ENCODE measurements at regions of chr7 and their contacts with region 1.

Region 1: GRCh38 chr7:148962823-148963582 is 65.3 kb downstream of the PDIA4 start:
- DNase-seq: peak; percentile 86
- H3K4me3 Mint-ChIP-seq: peak overlapping the region; percentile 91
- H3K27ac Mint-ChIP-seq: peak overlapping the region; percentile 95
- H3K4me1 Mint-ChIP-seq: peaks cover 25% of the 10 kb centered on the region
- H3K27me3 Mint-ChIP-seq: no peaks in the 10 kb centered on the region

Region 2: DNA sequence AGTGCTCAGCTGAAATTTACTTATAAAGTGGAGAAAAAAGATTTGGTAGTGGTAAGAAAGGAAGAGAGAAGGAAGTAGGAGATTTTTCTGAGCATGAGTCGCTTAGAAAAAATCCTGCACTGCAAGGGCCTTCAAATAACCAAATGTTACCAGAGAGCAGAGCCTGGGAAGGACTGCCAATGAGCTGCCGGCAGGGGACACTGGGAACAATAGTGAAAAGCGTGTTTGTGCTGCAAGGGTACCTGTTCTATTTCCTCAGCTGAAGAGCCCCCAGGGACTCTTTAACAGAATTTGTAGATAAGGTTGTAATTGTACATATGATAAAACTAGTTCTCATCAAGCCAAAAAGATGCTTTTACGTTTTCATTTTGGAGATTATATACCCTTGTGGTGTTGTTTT is 1068.7 kb before region 1 on chr7:
- CTCF ChIA-PET with region 1: no interaction called
- intact Hi-C with region 1: no loop called
- DNase-seq: no peak
- H3K4me3 Mint-ChIP-seq: no peak overlapping the region
- H3K27ac Mint-ChIP-seq: no peak overlapping the region
- H3K4me1 Mint-ChIP-seq: no peaks in the 10 kb centered on the region
- H3K27me3 Mint-ChIP-seq: no peaks in the 10 kb centered on the region

Region 3: DNA sequence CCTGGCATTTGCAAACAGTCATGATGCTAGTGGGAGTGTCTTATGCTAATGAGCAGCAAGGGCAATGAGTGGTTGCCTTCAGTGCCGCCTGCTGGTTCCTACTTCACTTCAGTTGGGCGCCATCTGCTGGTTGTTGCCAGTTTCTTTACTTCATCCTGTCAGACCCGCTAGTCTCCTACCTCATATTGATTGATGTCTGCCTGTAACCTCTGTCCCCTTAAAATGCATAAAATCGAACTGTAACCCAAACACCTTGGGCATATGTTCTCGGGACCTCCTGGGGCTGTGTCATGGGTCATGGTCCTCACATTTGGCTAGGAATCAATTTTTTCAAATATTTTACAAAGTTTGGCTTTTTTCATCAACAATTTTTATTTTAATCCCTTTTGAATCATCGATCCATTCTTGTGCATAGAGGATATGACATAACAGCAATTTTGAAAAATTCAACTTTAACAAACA is 435.3 kb before region 1 on chr7:
- CTCF ChIA-PET with region 1: no interaction called
- intact Hi-C with region 1: loop called (anchors 1 kb)
- DNase-seq: peak; percentile 98
- H3K4me3 Mint-ChIP-seq: no peak overlapping the region
- H3K27ac Mint-ChIP-seq: no peak overlapping the region
- H3K4me1 Mint-ChIP-seq: peaks cover 4% of the 10 kb centered on the region
- H3K27me3 Mint-ChIP-seq: peaks cover 33% of the 10 kb centered on the region

Region 4: GRCh38 chr7:148773334-148773733 is 189.7 kb before region 1 on chr7:
- CTCF ChIA-PET with region 1: interaction called, 5 read pairs
- intact Hi-C with region 1: loop called (anchors 2 kb)
- DNase-seq: peak; percentile 54
- H3K4me3 Mint-ChIP-seq: no peak overlapping the region
- H3K27ac Mint-ChIP-seq: peak overlapping the region; percentile 71
- H3K4me1 Mint-ChIP-seq: peaks cover 29% of the 10 kb centered on the region
- H3K27me3 Mint-ChIP-seq: no peaks in the 10 kb centered on the region

Region 5: GRCh38 chr7:148884299-148885022 is 78.5 kb before region 1 on chr7:
- CTCF ChIA-PET with region 1: interaction called, 6 read pairs
- intact Hi-C with region 1: loop called (anchors 1 kb)
- DNase-seq: peak; percentile 93
- H3K4me3 Mint-ChIP-seq: peak overlapping the region; percentile 94
- H3K27ac Mint-ChIP-seq: peak overlapping the region; percentile 99
- H3K4me1 Mint-ChIP-seq: peaks cover 37% of the 10 kb centered on the region
- H3K27me3 Mint-ChIP-seq: no peaks in the 10 kb centered on the region

Region 6: GRCh38 chr7:148987010-148987750 is 24.2 kb after region 1 on chr7:
- CTCF ChIA-PET with region 1: interaction called, 6 read pairs
- intact Hi-C with region 1: loop called (anchors 1 kb)
- DNase-seq: peak; percentile 88
- H3K4me3 Mint-ChIP-seq: peak overlapping the region; percentile 98
- H3K27ac Mint-ChIP-seq: peak overlapping the region; percentile 93
- H3K4me1 Mint-ChIP-seq: peaks cover 40% of the 10 kb centered on the region
- H3K27me3 Mint-ChIP-seq: peaks cover 7% of the 10 kb centered on the region

Region 7: DNA sequence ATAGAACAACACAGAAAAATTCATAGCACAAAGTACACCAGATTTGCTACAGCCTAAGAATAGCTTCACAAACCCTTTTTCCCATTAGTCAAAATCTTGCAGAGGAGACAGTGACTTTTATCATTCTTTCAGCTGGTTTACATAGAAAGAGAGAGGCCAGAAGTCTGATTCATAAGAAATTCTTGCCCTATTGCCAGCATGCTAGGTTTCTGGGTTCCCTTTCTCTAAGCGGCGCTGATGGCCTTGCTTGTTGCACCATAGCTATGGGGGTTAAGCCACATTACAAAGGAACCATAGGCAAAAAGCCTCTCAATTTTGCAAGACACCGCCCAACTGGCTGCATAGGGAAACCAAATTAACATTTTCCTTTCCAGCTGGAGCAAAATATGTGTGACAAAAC is 723.0 kb after region 1 on chr7:
- CTCF ChIA-PET with region 1: no interaction called
- intact Hi-C with region 1: no loop called
- DNase-seq: no peak
- H3K4me3 Mint-ChIP-seq: no peak overlapping the region
- H3K27ac Mint-ChIP-seq: no peak overlapping the region
- H3K4me1 Mint-ChIP-seq: no peaks in the 10 kb centered on the region
- H3K27me3 Mint-ChIP-seq: peaks cover 33% of the 10 kb centered on the region

Measured in activated naive CD4-positive, alpha-beta T cell treated with anti-CD3 and anti-CD28 coated beads for 36 hours (primary cell).